Astrocyte of the cerebellum (primary cell): ENCODE measurements at regions of chr2 and their contacts with region 1.

Region 1: GRCh38 chr2:198309673-198310280 is 505.4 kb downstream of the PLCL1 start:
- DNase-seq: peak; percentile 42
- H3K4me3 ChIP-seq: no peak overlapping the region
- CTCF ChIP-seq: peak; percentile 87

Region 2: GRCh38 chr2:199488772-199489400 is 1179.1 kb after region 1 on chr2:
- in situ Hi-C with region 1: loop called (anchors 5 kb)
- DNase-seq: peak; percentile 23
- H3K4me3 ChIP-seq: no peak overlapping the region
- CTCF ChIP-seq: peak; percentile 84

Region 3: GRCh38 chr2:199739413-199740110 is 1429.8 kb after region 1 on chr2:
- in situ Hi-C with region 1: loop called (anchors 25 kb)
- DNase-seq: peak; percentile 35
- H3K4me3 ChIP-seq: no peak overlapping the region
- CTCF ChIP-seq: peak; percentile 84